ENCODE measurements at regions of chr12 and their contacts with region 1.

Region 1: DNA sequence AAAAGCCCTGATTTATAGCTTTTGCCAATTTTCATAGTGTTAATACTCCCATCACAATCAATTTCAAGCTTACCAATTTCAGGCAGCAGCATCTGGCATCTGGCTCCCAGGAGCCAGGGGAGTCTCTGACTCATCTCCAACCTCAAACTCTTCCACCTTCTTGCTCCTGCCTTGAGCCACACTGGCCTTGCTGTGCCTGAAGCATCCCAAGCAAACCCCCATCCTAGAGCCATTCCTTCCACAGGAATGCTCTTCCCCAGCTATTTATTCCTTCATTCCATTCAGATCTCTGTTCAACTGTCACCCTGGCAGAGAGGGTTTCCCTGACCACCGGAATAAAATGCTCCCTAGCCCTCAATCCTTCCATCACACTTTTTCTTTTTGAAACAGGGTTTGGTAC is 13.9 kb upstream of the PPP1CC start:
- DNase-seq: peak; percentile 3

Region 2: DNA sequence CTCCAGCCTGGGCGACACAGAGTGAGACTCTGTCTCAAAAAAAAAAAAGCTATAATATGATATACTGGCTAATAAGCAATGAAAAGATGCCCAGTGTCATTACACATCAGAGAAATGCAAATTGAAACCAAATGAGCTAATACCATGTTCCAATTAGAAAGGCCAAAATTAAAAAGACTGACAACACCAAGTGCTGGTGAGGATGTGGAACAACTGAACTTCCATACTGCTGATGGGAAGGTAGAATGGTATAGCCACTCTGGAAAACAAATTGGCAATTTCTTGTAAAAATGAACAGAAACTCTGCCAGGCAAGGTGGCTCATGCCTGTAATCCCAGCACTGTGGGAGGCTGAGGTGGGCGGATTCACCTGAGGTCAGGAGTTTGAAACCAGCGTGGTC is 620.8 kb after region 1 on chr12:
- intact Hi-C with region 1: loop called in 1 of 2 experiments (anchors 5 kb)
- DNase-seq: no peak